ENCODE measurements at regions of chr7 and their contacts with region 1.

Region 1: DNA sequence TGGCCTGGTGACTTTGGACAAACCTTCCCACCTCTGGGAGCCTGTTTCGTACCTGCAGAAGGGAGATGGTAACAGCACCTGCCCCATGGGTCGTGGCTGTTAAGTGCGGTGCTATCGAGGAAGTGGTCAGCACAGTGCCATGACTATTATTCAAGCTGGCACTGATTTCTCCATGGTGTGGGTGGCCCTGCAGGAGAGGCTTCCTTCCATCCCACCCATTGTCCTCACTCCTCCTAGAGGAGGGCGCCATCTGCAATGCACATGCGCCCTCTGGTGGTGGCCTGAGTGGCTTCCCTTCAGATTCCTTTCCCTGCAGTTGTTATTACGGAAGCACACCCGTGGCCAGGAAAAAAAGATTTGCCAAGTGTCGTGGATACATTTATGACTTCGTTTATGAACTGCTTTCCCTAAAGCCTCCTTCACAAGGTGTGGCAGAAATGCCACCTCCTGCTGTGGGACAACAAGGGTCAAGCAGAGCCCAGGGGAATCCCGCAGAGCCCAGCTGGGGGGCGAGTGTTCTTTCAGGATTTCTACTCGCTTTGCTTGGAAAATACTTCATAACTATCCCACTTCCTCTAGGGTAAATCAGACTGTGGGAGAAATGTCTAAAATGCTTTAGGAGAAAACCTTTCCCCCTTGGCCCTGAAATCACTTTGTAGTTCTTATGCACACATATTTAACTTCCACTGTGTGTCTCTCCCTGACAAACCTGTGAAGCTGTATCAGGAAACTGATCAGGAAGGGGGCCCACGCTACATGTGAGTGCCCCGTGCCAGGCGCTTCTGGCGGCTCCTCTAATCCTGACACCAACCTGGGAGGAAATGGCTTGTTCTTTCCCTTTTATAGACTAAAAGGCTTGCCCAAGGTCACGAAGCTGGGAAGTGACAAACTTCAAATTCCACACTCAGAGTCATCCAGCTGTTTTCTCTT is 98.0 kb upstream of the ANLN start:
- DNase-seq: peak; percentile 96
- H3K4me3 Mint-ChIP-seq: peak overlapping the region; percentile 21
- H3K27ac Mint-ChIP-seq: peak overlapping the region; percentile 56
- H3K4me1 Mint-ChIP-seq: peaks cover 68% of the 10 kb centered on the region
- H3K27me3 Mint-ChIP-seq: no peaks in the 10 kb centered on the region
- CTCF ChIP-seq: peak; percentile 100

Region 2: GRCh38 chr7:35985126-35985754 is 306.4 kb before region 1 on chr7:
- CTCF ChIA-PET with region 1: interaction called, 26 read pairs
- intact Hi-C with region 1: loop called (anchors 1 kb)
- DNase-seq: peak; percentile 94
- H3K4me3 Mint-ChIP-seq: no peak overlapping the region
- H3K27ac Mint-ChIP-seq: no peak overlapping the region
- H3K4me1 Mint-ChIP-seq: peaks cover 10% of the 10 kb centered on the region
- H3K27me3 Mint-ChIP-seq: no peaks in the 10 kb centered on the region
- CTCF ChIP-seq: peak; percentile 95

Region 3: GRCh38 chr7:36037121-36037662 is 254.5 kb before region 1 on chr7:
- CTCF ChIA-PET with region 1: interaction called, 12 read pairs
- intact Hi-C with region 1: loop called (anchors 2 kb)
- DNase-seq: peak; percentile 86
- H3K4me3 Mint-ChIP-seq: no peak overlapping the region
- H3K27ac Mint-ChIP-seq: peak overlapping the region; percentile 16
- H3K4me1 Mint-ChIP-seq: peaks cover 54% of the 10 kb centered on the region
- H3K27me3 Mint-ChIP-seq: no peaks in the 10 kb centered on the region
- CTCF ChIP-seq: no peak

Region 4: GRCh38 chr7:36115448-36116321 is 176.0 kb before region 1 on chr7:
- CTCF ChIA-PET with region 1: interaction called, 3 read pairs
- intact Hi-C with region 1: loop called (anchors 2 kb)
- DNase-seq: peak; percentile 94
- H3K4me3 Mint-ChIP-seq: peak overlapping the region; percentile 57
- H3K27ac Mint-ChIP-seq: peak overlapping the region; percentile 93
- H3K4me1 Mint-ChIP-seq: peaks cover 60% of the 10 kb centered on the region
- H3K27me3 Mint-ChIP-seq: no peaks in the 10 kb centered on the region
- CTCF ChIP-seq: no peak

Region 5: GRCh38 chr7:36152756-36153570 is 138.7 kb before region 1 on chr7 and contains the start of gene EEPD1:
- CTCF ChIA-PET with region 1: interaction called, 11 read pairs
- intact Hi-C with region 1: loop called (anchors 1 kb)
- DNase-seq: peak; percentile 100
- H3K4me3 Mint-ChIP-seq: peak within 1 kb of the TSS; percentile 93
- H3K27ac Mint-ChIP-seq: peak within 1 kb of the TSS; percentile 74
- H3K4me1 Mint-ChIP-seq: peaks cover 57% of the 10 kb centered on the region
- H3K27me3 Mint-ChIP-seq: no peaks in the 10 kb centered on the region
- CTCF ChIP-seq: peak; percentile 11
- total RNA-seq, gene EEPD1: 48.8 and 55.5 TPM in 2 replicates

Region 6: GRCh38 chr7:36227223-36227622 is 64.4 kb before region 1 on chr7:
- CTCF ChIA-PET with region 1: no interaction called
- intact Hi-C with region 1: no loop called
- DNase-seq: no peak
- H3K4me3 Mint-ChIP-seq: no peak overlapping the region
- H3K27ac Mint-ChIP-seq: no peak overlapping the region
- H3K4me1 Mint-ChIP-seq: peaks cover 31% of the 10 kb centered on the region
- H3K27me3 Mint-ChIP-seq: no peaks in the 10 kb centered on the region
- CTCF ChIP-seq: no peak

Region 7: DNA sequence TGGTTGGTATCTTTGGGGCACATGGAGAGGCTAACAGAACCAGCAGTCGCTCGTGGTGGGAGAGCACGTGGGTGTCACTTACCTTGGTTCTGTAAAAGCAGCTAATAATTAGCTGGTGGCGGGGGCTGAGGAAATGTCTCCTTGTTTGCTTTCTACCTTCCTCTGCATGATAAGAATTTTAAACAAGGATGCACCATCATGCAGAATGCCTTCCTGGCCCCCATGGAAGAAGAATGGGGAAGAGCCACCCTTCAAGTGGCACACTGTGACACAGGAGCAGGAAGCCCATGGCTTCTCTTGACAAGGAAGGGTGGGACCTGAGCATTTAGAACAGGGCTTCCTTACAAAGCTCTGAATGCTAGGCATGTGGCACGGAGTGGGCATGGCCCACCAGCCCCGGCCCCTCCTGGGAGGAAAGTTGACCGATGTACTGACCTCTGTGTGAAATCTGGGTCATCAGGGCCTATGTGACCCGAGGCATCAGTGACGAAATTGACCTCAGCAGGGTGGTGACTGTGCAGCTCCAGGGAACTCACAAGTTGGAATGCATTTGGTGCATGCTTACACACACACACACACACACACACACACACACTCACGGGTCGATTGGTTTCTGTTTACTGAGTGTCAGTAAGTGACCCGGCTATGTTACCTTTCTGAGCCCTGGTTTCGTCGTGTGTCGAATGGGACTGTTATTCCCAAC is 18.9 kb before region 1 on chr7:
- CTCF ChIA-PET with region 1: interaction called, 26 read pairs
- intact Hi-C with region 1: loop called (anchors 1 kb)
- DNase-seq: peak; percentile 86
- H3K4me3 Mint-ChIP-seq: peak overlapping the region; percentile 25
- H3K27ac Mint-ChIP-seq: peak overlapping the region; percentile 93
- H3K4me1 Mint-ChIP-seq: peaks cover 68% of the 10 kb centered on the region
- H3K27me3 Mint-ChIP-seq: no peaks in the 10 kb centered on the region
- CTCF ChIP-seq: no peak

Measured in Calu3 (cell line).